ENCODE measurements at regions of chr14 and their contacts with region 1.

Region 1: GRCh38 chr14:102819176-102819628 is 42.0 kb downstream of the TRAF3 start:
- DNase-seq: peak; percentile 93
- H3K4me3 Mint-ChIP-seq: peak overlapping the region; percentile 44
- H3K27ac Mint-ChIP-seq: peak overlapping the region; percentile 93
- H3K4me1 Mint-ChIP-seq: peaks cover 88% of the 10 kb centered on the region
- H3K27me3 Mint-ChIP-seq: no peaks in the 10 kb centered on the region

Region 2: DNA sequence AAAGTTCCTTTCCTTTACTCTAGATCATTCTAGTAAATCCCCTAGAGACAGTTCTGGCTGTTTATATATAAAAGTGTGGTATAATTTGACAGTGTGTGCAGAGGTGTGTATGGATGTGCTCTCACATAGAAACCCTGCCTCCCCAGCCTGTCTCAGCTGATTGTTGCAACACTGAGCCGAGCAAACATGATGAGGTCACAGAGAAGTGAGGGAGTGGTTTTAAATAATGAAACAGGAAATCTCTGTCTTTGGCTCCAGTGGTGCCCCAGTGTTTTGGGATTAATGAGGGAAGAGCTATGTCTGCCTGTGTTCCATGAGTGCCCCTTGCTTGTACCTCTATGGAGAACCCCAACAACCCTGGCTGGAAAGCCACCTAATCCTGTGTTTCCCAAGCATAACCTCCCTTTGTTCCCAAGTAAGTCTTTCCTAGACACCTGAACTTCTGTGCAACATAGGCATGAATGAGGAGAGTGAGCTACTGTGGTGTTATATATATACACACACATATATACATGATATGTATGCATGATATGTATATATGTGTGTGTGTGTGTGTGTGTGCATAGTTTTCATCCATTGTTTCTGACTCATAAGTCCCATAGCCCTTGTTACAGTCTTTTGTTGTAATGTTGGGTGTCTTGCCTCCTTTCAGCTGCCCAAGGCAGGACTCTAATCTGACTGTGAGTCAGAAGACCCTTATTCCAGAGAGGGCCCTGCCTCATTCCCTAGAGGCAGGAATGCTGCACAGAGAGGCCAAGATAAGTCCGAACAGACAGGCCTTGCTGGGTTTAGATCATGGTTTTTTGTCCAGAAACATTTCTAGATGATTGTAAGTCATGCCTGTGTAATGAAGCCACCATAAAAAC is 23.9 kb before region 1 on chr14:
- CTCF ChIA-PET with region 1: no interaction called
- intact Hi-C with region 1: loop called (anchors 1 kb)
- DNase-seq: peak; percentile 76
- H3K4me3 Mint-ChIP-seq: no peak overlapping the region
- H3K27ac Mint-ChIP-seq: peak overlapping the region; percentile 65
- H3K4me1 Mint-ChIP-seq: peaks cover 78% of the 10 kb centered on the region
- H3K27me3 Mint-ChIP-seq: no peaks in the 10 kb centered on the region

Region 3: DNA sequence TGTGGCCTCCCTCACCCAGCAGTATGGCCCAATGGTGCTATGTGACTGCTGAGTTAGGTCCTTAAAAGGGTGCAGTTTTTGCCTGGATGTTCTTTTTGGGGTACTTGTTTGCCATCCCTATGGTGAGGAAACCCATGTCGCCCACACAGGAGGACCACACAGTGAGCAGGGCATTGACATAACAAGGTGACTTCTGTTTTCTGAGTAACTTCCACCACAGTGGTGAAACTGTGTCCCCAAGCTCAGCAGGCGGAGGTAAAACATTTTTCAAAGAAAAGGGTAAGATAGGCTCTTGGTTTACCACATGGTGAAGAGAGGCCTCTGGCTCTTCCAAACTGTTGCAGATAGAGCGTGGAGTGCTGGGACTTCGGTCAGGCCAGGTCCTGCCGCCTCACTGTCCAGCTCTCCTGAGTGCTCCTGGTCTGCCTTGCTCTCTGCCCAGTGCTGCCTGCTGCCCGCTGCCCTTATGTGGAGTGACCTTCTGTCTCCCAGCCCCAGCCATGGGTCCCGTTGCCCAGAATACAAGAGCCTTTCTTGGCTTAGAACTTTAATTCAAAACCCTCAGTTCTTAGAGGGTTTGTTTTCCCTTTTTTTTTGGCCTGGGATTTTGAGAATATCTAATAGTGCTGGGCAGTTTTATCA is 12.1 kb after region 1 on chr14:
- CTCF ChIA-PET with region 1: no interaction called
- intact Hi-C with region 1: no loop called
- DNase-seq: no peak
- H3K4me3 Mint-ChIP-seq: no peak overlapping the region
- H3K27ac Mint-ChIP-seq: no peak overlapping the region
- H3K4me1 Mint-ChIP-seq: peaks cover 51% of the 10 kb centered on the region
- H3K27me3 Mint-ChIP-seq: no peaks in the 10 kb centered on the region

Region 4: GRCh38 chr14:102882226-102882906 is 63.2 kb after region 1 on chr14:
- CTCF ChIA-PET with region 1: no interaction called
- intact Hi-C with region 1: loop called (anchors 1 kb)
- DNase-seq: no peak
- H3K4me3 Mint-ChIP-seq: no peak overlapping the region
- H3K27ac Mint-ChIP-seq: peak overlapping the region; percentile 80
- H3K4me1 Mint-ChIP-seq: peaks cover 20% of the 10 kb centered on the region
- H3K27me3 Mint-ChIP-seq: no peaks in the 10 kb centered on the region

Measured in activated naive CD4-positive, alpha-beta T cell treated with anti-CD3 and anti-CD28 coated beads for 36 hours (primary cell).